ENCODE measurements at regions of chr2 and their contacts with region 1.

Region 1: GRCh38 chr2:192604295-192604694 is 409.6 kb upstream of the TMEFF2 start:
- DNase-seq: no peak
- ATAC-seq: no peak
- H3K4me3 ChIP-seq: no peak overlapping the region
- H3K27ac ChIP-seq: no peak overlapping the region
- H3K4me1 ChIP-seq: no peaks in the 10 kb centered on the region
- H3K27me3 ChIP-seq: no peaks in the 10 kb centered on the region
- CTCF ChIP-seq: no peak

Region 2: DNA sequence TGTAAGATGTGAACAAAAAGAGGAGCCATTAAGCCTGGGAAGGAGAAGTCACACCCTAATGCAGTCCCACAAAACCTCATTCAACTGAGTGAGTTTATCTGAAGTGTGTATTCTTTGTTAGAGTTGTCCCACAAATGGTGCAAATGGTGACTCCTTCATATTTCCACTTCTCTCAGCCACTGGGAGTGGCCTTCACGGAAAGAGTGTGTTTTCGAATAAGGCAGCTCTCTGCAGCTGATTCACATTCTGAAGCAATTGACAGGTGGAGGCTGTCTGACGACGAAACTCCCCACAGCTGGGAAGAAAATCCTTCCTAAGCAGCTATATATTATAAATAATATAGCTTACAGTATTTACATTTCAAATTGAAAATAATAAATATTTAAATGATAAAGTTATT is 90.7 kb before region 1 on chr2:
- CTCF ChIA-PET with region 1: interaction called, 11 read pairs
- POLR2A ChIA-PET with region 1: no interaction called
- in situ Hi-C with region 1: no loop called
- intact Hi-C with region 1: no loop called
- DNase-seq: no peak
- ATAC-seq: no peak
- H3K4me3 ChIP-seq: no peak overlapping the region
- H3K27ac ChIP-seq: no peak overlapping the region
- H3K4me1 ChIP-seq: no peaks in the 10 kb centered on the region
- H3K27me3 ChIP-seq: no peaks in the 10 kb centered on the region
- CTCF ChIP-seq: no peak

Region 3: DNA sequence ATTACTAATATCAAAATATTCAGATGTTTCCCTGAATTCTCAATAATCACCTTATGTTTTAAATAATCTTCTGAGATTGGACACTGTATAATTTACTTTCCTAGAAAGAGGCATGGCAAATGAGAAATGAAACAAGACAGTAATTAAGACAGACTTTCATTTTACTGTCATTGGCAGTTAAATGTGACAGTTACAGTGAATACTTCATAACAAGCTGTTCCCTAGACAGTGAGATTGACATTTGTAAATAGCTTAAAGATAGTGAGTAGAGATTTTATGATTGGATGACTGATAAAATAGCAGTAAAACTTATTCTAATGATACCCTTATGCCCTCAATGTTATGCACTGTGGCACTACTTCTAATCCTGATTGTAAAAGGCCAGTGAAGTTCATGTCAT is 115.3 kb after region 1 on chr2:
- CTCF ChIA-PET with region 1: no interaction called
- POLR2A ChIA-PET with region 1: no interaction called
- in situ Hi-C with region 1: no loop called
- intact Hi-C with region 1: no loop called
- DNase-seq: no peak
- ATAC-seq: no peak
- H3K4me3 ChIP-seq: no peak overlapping the region
- H3K27ac ChIP-seq: no peak overlapping the region
- H3K4me1 ChIP-seq: no peaks in the 10 kb centered on the region
- H3K27me3 ChIP-seq: no peaks in the 10 kb centered on the region
- CTCF ChIP-seq: no peak

Measured in Panc1 (cell line).